Prostate gland (tissue), 2 donors: ENCODE measurements at regions of chr5 and their contacts with region 1.

Region 1: GRCh38 chr5:157431544-157432200 is 28.3 kb upstream of the NIPAL4 start:
- DNase-seq: peak; percentile 33
- H3K4me3 ChIP-seq: no peak overlapping the region
- H3K27ac ChIP-seq: no peak overlapping the region
- H3K4me1 ChIP-seq: no peaks in the 10 kb centered on the region
- H3K27me3 ChIP-seq: no peaks in the 10 kb centered on the region
- CTCF ChIP-seq: peak in 3 of 4 experiments; percentile 44 to 70 (median 61)
- POLR2A ChIP-seq: no peak

Region 2: GRCh38 chr5:157046041-157046440 is 385.6 kb before region 1 on chr5:
- intact Hi-C with region 1: no loop called
- DNase-seq: no peak
- H3K4me3 ChIP-seq: no peak overlapping the region
- H3K27ac ChIP-seq: no peak overlapping the region
- H3K4me1 ChIP-seq: no peaks in the 10 kb centered on the region
- H3K27me3 ChIP-seq: no peaks in the 10 kb centered on the region
- CTCF ChIP-seq: no peak
- POLR2A ChIP-seq: no peak

Region 3: GRCh38 chr5:157471709-157472108 is 40.0 kb after region 1 on chr5:
- intact Hi-C with region 1: loop called (anchors 5 kb)
- DNase-seq: no peak
- H3K4me3 ChIP-seq: no peak overlapping the region
- H3K27ac ChIP-seq: no peak overlapping the region
- H3K4me1 ChIP-seq: no peaks in the 10 kb centered on the region
- H3K27me3 ChIP-seq: no peaks in the 10 kb centered on the region
- CTCF ChIP-seq: peak in 3 of 4 experiments; percentile 30 to 53 (median 33)
- POLR2A ChIP-seq: no peak

Region 4: DNA sequence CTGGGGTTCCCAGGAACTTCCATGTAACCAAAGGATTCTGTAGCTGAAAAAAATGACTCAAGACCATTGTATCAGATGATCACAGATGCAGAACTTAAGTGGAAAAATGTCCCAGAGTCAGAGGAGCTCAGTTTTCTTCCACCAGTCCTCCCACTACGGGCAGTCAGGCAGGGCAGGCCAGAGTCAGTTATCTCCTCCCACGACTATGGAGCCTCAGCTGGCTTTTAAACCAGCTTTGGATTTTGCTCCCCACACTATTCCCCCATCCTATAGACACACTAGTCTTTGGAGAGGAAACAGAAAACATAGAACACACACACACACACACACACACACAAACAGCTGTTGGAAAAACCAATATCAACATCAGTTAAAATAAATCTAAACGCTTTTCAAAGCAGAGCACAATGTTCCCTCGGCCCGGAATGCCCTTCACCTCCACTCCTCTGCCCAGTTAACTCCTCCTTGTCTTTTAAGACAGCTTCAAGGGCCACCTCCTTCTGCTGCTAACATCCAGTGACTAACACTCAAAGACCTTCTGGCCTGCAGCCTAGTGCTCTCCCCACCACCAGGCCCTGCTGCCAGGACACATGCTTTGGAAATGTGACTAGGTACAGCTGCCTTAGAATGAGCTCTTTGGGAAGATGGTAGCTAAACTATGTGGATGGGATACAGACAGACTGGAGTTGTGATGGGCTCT is 85.1 kb after region 1 on chr5:
- intact Hi-C with region 1: no loop called
- DNase-seq: peak; percentile 16
- H3K4me3 ChIP-seq: no peak overlapping the region
- H3K27ac ChIP-seq: peak overlapping the region; percentile 51 to 55
- H3K4me1 ChIP-seq: no peaks in the 10 kb centered on the region
- H3K27me3 ChIP-seq: no peaks in the 10 kb centered on the region
- CTCF ChIP-seq: no peak
- POLR2A ChIP-seq: no peak

Region 5: GRCh38 chr5:157718519-157718918 is 286.8 kb after region 1 on chr5:
- intact Hi-C with region 1: loop called (anchors 2 kb)
- DNase-seq: no peak
- H3K4me3 ChIP-seq: no peak overlapping the region
- H3K27ac ChIP-seq: no peak overlapping the region
- H3K4me1 ChIP-seq: no peaks in the 10 kb centered on the region
- H3K27me3 ChIP-seq: no peaks in the 10 kb centered on the region
- CTCF ChIP-seq: peak in 3 of 4 experiments; percentile 35 to 61 (median 60)
- POLR2A ChIP-seq: no peak